Adrenal gland (tissue), 19 donors: ENCODE measurements at regions of chr3 and their contacts with region 1.

Region 1: GRCh38 chr3:52220380-52221026 is 4.9 kb downstream of the TLR9 start:
- DNase-seq: peak; percentile 86 to 96 (median 89)
- H3K4me3 ChIP-seq: no peak overlapping the region
- H3K27ac ChIP-seq: peak overlapping the region in 1 of 5 donors; percentile 20
- H3K4me1 ChIP-seq: peaks cover 3 to 21% of the 10 kb centered on the region in 2 donors
- H3K27me3 ChIP-seq: no peaks in the 10 kb centered on the region
- CTCF ChIP-seq: peak; percentile 85 to 93 (median 86)
- POLR2A ChIP-seq: peak in 1 of 2 donors; percentile 10

Region 2: GRCh38 chr3:52328536-52329080 is 108.1 kb after region 1 on chr3:
- intact Hi-C with region 1: loop called in 1 of 2 experiments (anchors 5 kb)
- DNase-seq: no peak
- H3K4me3 ChIP-seq: no peak overlapping the region
- H3K27ac ChIP-seq: no peak overlapping the region
- H3K4me1 ChIP-seq: peaks cover 6% of the 10 kb centered on the region in 2 donors
- H3K27me3 ChIP-seq: no peaks in the 10 kb centered on the region
- CTCF ChIP-seq: no peak
- POLR2A ChIP-seq: no peak

Region 3: DNA sequence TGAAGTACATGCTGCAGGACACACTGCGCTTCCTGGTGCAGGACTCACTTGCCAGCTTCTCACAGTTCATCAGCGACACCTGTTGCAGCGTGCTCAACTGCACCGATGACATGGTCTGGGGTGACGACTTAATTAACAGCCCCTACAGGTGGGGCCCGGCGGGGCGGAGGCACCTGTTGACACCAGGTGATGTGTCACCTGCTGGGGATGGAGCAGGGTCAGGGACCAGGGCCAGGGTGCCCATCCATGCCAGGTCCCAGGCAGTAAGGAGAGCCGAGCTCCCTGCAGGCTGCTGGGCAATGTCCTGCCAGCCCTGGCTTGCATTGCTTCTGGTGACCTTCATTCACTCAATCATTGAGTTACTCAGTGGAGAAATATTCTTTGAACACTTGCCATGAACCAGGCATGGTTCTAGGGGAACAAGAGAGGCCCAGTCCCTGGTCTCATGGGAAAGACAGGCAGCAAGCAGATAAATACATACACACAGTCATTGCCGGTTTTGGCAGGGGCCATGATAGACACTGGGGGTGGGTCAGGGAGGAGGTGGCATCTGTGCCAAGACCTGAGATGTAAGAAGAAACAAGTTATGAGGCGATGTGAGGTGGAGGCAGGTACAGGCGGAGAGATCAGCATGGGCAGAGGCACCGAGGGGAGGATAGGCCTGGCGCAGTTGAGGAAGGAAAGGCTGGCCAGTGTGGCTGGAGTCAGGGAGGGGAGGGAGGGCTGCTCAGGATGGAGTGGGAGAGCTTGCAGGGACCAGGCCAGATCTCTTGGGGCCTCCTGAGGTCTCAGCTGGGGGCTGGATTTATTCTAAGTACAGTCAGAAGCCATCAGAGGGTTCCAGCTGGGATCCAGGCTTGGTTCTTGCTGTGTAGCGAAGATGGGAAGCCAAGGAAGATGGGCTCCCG is 126.4 kb after region 1 on chr3:
- intact Hi-C with region 1: loop called in 1 of 2 experiments (anchors 5 kb)
- DNase-seq: peak; percentile 64 to 91 (median 86)
- H3K4me3 ChIP-seq: no peak overlapping the region
- H3K27ac ChIP-seq: peak overlapping the region; percentile 12 to 88 (median 73)
- H3K4me1 ChIP-seq: peaks cover 18 to 20% of the 10 kb centered on the region in 2 donors
- H3K27me3 ChIP-seq: no peaks in the 10 kb centered on the region
- CTCF ChIP-seq: peak in 1 of 6 experiments; percentile 7
- POLR2A ChIP-seq: peak in 1 of 2 donors; percentile 7

Region 4: GRCh38 chr3:52801839-52802487 is 581.5 kb after region 1 on chr3:
- intact Hi-C with region 1: no loop called
- DNase-seq: no peak
- H3K4me3 ChIP-seq: no peak overlapping the region
- H3K27ac ChIP-seq: peak overlapping the region in 1 of 5 donors; percentile 63
- H3K4me1 ChIP-seq: no peaks in the 10 kb centered on the region
- H3K27me3 ChIP-seq: no peaks in the 10 kb centered on the region
- CTCF ChIP-seq: no peak
- POLR2A ChIP-seq: no peak